CD8-positive, alpha-beta memory T cell (primary cell): ENCODE measurements at regions of chr11 and their contacts with region 1.

Region 1: GRCh38 chr11:72040726-72041441 is 39.5 kb downstream of the NUMA1 start:
- DNase-seq: peak; percentile 68 to 87 (median 77)
- H3K4me3 ChIP-seq: peak overlapping the region; percentile 68
- H3K4me3 Mint-ChIP-seq: no peak overlapping the region
- H3K27ac ChIP-seq: peak overlapping the region; percentile 90
- H3K27ac Mint-ChIP-seq: no peak overlapping the region
- H3K4me1 ChIP-seq: peaks cover 67% of the 10 kb centered on the region
- H3K4me1 Mint-ChIP-seq: peaks cover 11 to 32% (median 13%) of the 10 kb centered on the region in 3 donors
- H3K27me3 ChIP-seq: no peaks in the 10 kb centered on the region
- H3K27me3 Mint-ChIP-seq: no peaks in the 10 kb centered on the region

Region 2: DNA sequence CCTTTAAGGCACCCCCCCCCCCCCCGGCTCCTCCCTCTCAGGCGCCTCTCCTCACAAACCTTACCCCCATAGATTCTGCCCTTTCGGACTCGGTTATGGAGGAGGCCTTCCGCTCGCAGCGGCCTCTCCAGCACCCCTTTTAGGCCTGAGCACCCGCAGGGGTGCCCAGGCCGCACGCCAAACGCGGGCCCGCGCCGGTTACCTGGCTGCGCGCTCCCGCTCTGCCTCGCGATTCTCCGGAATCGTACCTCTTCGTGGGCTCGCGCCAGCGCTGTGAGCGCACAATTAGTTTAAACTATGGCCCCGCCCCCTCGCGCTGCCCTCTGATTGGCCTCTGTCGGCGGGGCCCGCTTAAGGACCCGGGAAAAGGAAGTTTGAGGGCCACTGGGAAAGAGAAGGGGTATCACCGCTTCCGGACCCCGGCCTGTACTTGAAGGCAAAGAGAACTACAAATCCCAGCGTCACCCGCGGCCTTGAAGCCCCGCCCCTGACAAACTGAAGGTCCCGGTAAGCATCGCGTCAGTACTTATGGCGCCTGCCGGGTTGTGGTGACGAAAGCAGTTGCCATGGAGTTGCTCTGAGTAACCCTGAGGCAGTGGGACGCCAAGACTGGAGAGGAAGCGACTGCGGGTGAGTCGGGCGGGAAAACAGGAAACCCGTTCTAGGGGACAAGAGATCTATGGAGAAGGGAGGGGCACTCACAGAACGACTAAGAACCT is 39.5 kb after region 1 on chr11 and contains the starts of genes LRRC51 and NUMA1:
- CTCF ChIA-PET with region 1: interaction called, 6 read pairs
- POLR2A ChIA-PET with region 1: interaction called, 12 read pairs
- DNase-seq: peak; percentile 96 to 100 (median 99)
- H3K4me3 ChIP-seq: peak within 1 kb of the TSS; percentile 67
- H3K4me3 Mint-ChIP-seq: peak within 1 kb of the TSS; percentile 77 to 92 (median 90)
- H3K27ac ChIP-seq: peak within 1 kb of the TSS; percentile 88
- H3K27ac Mint-ChIP-seq: peak within 1 kb of the TSS; percentile 95 to 99 (median 98)
- H3K4me1 ChIP-seq: peaks cover 20% of the 10 kb centered on the region
- H3K4me1 Mint-ChIP-seq: peaks cover 30 to 49% (median 43%) of the 10 kb centered on the region in 3 donors
- H3K27me3 ChIP-seq: no peaks in the 10 kb centered on the region
- H3K27me3 Mint-ChIP-seq: no peaks in the 10 kb centered on the region
- total RNA-seq, gene LRRC51: 8.2 to 8.9 TPM
- total RNA-seq, gene NUMA1: 106 to 110 TPM

Region 3: DNA sequence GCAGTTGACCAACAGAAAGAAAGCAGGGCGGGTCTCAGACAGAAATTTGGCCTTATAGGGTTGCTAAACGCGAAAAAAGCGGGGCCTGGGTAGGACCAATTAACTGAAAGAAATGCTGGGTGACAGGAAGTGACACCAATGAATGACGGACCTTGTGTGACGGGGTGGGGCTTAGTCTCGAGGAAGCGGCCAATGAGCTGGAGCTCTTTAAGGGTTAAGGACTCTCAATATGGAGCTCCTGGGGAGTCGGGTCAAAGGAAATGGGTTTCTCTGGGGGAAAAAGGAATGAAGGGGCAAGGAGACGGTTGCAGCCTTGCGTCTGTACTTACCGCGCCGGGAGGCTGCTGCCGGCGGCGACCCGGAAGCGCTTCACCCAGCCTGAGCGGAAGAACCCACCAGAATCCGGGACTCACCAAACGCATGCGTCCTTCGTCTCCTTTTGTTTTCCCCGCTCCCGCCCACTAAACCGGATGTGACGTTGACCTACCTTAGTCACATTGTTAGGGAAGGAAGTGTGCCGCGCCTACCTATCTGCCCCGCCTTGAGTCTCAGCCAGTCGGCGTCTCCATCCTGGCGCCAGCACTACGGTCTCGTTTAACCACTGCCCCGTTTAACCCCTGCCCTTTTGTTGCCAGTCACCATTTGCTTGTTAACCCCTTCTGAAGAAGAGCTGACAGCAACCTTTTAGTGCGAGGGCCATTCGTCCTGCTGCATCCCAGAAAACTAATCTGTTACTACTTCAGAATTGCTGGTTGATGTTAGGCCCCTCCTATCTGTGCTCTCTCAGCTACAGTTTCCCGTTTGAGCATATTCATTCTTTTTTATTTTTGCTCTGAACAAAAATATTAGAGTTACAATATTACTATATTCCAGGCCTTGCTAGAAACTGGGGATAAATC is 71.7 kb after region 1 on chr11 and contains the start of gene ANAPC15:
- CTCF ChIA-PET with region 1: interaction called, 5 read pairs
- POLR2A ChIA-PET with region 1: interaction called, 10 read pairs
- DNase-seq: peak; percentile 92 to 99 (median 99)
- H3K4me3 ChIP-seq: peak within 1 kb of the TSS; percentile 71
- H3K4me3 Mint-ChIP-seq: peak within 1 kb of the TSS; percentile 94 to 99 (median 96)
- H3K27ac ChIP-seq: peak within 1 kb of the TSS; percentile 89
- H3K27ac Mint-ChIP-seq: peak within 1 kb of the TSS; percentile 96 to 100 (median 98)
- H3K4me1 ChIP-seq: peaks cover 16% of the 10 kb centered on the region
- H3K4me1 Mint-ChIP-seq: peaks cover 24 to 25% (median 25%) of the 10 kb centered on the region in 3 donors
- H3K27me3 ChIP-seq: no peaks in the 10 kb centered on the region
- H3K27me3 Mint-ChIP-seq: peaks cover 4 to 11% of the 10 kb centered on the region in 2 donors
- total RNA-seq, gene ANAPC15: 63.3 to 66.2 TPM

Region 4: DNA sequence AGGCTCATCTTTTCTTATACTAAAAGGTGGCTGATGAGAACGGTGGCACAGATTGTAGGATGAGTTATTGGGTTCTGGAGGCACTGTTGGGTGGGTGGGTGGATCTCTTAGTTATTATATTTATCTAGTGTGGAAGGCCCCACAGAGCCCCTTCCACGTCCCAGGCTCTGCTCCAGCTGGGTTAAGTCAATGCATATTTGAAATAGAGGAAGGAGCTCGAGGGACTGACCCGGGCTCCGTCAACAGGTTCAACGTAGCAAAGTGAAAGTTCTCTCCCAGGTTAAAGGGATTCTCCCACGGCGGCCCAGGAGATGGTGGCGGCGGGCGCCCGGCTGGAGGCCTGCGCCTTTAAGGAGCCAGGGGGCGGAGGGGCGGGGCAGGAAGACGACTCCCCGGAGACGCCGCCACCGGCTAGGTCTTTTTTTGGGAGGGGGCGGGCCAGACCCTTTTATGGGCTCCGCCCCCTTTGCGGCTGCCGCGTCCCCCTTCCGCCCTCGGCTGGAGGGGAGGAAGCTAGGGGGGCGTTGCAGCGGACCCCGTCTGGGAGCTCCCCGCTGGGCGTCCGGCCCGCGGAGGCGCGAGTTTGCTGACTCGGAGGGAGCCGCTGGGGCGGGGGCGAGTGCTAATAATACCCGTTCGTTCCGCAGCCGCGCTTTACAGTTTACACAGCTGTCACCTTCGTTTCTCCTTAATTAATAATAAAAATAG is 182.2 kb after region 1 on chr11:
- CTCF ChIA-PET with region 1: no interaction called
- POLR2A ChIA-PET with region 1: interaction called, 10 read pairs
- DNase-seq: peak; percentile 92 to 95 (median 94)
- H3K4me3 ChIP-seq: peak overlapping the region; percentile 73
- H3K4me3 Mint-ChIP-seq: peak overlapping the region; percentile 89 to 95 (median 92)
- H3K27ac ChIP-seq: peak overlapping the region; percentile 77
- H3K27ac Mint-ChIP-seq: peak overlapping the region; percentile 84 to 98 (median 94)
- H3K4me1 ChIP-seq: peaks cover 18% of the 10 kb centered on the region
- H3K4me1 Mint-ChIP-seq: peaks cover 23 to 33% (median 24%) of the 10 kb centered on the region in 3 donors
- H3K27me3 ChIP-seq: no peaks in the 10 kb centered on the region
- H3K27me3 Mint-ChIP-seq: peaks cover 0 to 2% of the 10 kb centered on the region in 2 donors